Sigmoid colon (tissue), 7 donors: ENCODE measurements at regions of chr14 and their contacts with region 1.

Region 1: DNA sequence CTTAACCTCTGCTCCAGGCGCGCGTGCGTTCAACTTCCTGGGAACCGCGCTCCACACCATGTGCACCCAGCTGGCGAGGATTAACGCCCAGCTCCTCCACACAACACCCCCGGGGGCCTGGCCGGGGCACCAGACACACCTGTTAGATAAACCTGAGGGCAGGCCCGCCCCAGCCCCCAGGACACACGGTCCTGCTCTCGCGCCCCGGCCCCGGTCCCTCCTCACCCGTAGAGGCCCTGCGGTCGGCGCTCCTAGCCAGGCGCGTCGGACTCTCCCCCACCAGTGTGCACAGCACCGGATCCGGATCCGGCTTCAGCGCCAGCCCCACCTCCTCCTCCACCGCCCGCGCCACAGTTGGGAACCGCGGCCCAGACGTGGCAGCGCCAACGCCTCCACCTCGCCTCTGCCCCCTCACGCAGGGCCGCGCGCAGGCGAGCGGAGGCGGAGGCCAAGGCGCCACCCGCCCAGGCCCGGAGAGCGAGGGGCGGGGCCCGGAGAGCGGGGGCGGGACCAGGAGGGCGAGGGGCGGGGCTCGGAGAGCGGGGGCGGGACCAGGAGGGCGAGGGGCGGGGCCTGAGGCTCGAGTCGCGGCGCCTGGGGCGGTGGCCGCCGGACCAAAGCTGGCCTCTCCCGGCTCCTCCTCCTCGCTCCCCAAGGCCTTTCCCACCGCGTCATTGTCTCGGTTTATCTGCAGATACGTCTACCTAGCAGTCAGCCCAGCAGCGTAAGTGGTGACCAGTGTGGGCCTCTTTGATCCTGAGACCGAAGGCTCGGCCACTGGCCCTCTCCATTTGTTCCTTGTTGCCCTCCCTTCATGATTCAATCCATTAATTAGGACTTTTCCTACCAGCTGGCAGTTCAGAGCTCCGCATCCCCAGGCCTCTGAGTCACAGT is at the start of gene GNPNAT1:
- DNase-seq: peak; percentile 93
- H3K4me3 ChIP-seq: peak within 1 kb of the TSS; percentile 66 to 84 (median 74)
- H3K27ac ChIP-seq: peak within 1 kb of the TSS; percentile 83 to 91 (median 89)
- H3K4me1 ChIP-seq: peaks cover 0 to 28% (median 14%) of the 10 kb centered on the region in 4 donors
- H3K27me3 ChIP-seq: no peaks in the 10 kb centered on the region
- CTCF ChIP-seq: no peak
- EP300 ChIP-seq: no peak
- POLR2A ChIP-seq: peak; percentile 17 to 52
- total RNA-seq, gene GNPNAT1: 13.3 to 18.8 (median 15.3) TPM

Region 2: GRCh38 chr14:52729925-52730667 is 61.4 kb before region 1 on chr14 and contains the start of gene STYX:
- intact Hi-C with region 1: loop called (anchors 5 kb)
- DNase-seq: peak; percentile 99
- H3K4me3 ChIP-seq: peak within 1 kb of the TSS; percentile 71 to 97 (median 78)
- H3K27ac ChIP-seq: peak within 1 kb of the TSS; percentile 86 to 94 (median 88)
- H3K4me1 ChIP-seq: peaks cover 0 to 11% (median 8%) of the 10 kb centered on the region in 4 donors
- H3K27me3 ChIP-seq: no peaks in the 10 kb centered on the region
- CTCF ChIP-seq: peak in 2 of 4 experiments; percentile 15 to 24
- EP300 ChIP-seq: no peak
- POLR2A ChIP-seq: peak; percentile 55 to 67
- total RNA-seq, gene STYX: 18.6 to 24.7 (median 23.0) TPM

Region 3: GRCh38 chr14:52755607-52756253 is 35.7 kb before region 1 on chr14:
- intact Hi-C with region 1: no loop called
- DNase-seq: no peak
- H3K4me3 ChIP-seq: no peak overlapping the region
- H3K27ac ChIP-seq: no peak overlapping the region
- H3K4me1 ChIP-seq: no peaks in the 10 kb centered on the region
- H3K27me3 ChIP-seq: no peaks in the 10 kb centered on the region
- CTCF ChIP-seq: no peak
- EP300 ChIP-seq: no peak
- POLR2A ChIP-seq: no peak

Region 4: GRCh38 chr14:53152890-53153701 is 361.6 kb after region 1 on chr14 and contains the start of gene DDHD1:
- intact Hi-C with region 1: loop called (anchors 2 kb)
- DNase-seq: peak; percentile 86
- H3K4me3 ChIP-seq: peak within 1 kb of the TSS; percentile 63 to 87 (median 76)
- H3K27ac ChIP-seq: peak within 1 kb of the TSS; percentile 84 to 97 (median 96)
- H3K4me1 ChIP-seq: peaks cover 0 to 24% (median 18%) of the 10 kb centered on the region in 4 donors
- H3K27me3 ChIP-seq: no peaks in the 10 kb centered on the region
- CTCF ChIP-seq: no peak
- EP300 ChIP-seq: no peak
- POLR2A ChIP-seq: no peak
- total RNA-seq, gene DDHD1: 15.2 to 21.4 (median 17.9) TPM